ENCODE measurements at regions of chr1 and their contacts with region 1.

Region 1: GRCh38 chr1:170074250-170075157 is at the start of gene KIFAP3:
- DNase-seq: peak; percentile 97
- ATAC-seq: peak; percentile 98
- H3K4me3 Mint-ChIP-seq: peak within 1 kb of the TSS; percentile 100
- H3K27ac Mint-ChIP-seq: peak within 1 kb of the TSS; percentile 93
- H3K4me1 Mint-ChIP-seq: peaks cover 46% of the 10 kb centered on the region
- H3K27me3 Mint-ChIP-seq: no peaks in the 10 kb centered on the region
- CTCF ChIP-seq: peak; percentile 26
- total RNA-seq, gene KIFAP3: 14.0 to 14.7 TPM

Region 2: GRCh38 chr1:169893494-169894362 is 180.8 kb before region 1 on chr1 and contains the start of gene SCYL3:
- CTCF ChIA-PET with region 1: interaction called, 7 read pairs
- POLR2A ChIA-PET with region 1: no interaction called
- intact Hi-C with region 1: loop called (anchors 10 kb)
- DNase-seq: peak; percentile 93
- ATAC-seq: peak; percentile 86
- H3K4me3 Mint-ChIP-seq: peak within 1 kb of the TSS; percentile 70
- H3K27ac Mint-ChIP-seq: peak within 1 kb of the TSS; percentile 98
- H3K4me1 Mint-ChIP-seq: peaks cover 38% of the 10 kb centered on the region
- H3K27me3 Mint-ChIP-seq: no peaks in the 10 kb centered on the region
- CTCF ChIP-seq: no peak
- total RNA-seq, gene SCYL3: 7.7 to 8.4 TPM

Region 3: GRCh38 chr1:170531758-170532657 is 457.5 kb after region 1 on chr1 and contains the start of gene GORAB:
- CTCF ChIA-PET with region 1: no interaction called
- POLR2A ChIA-PET with region 1: interaction called, 3 read pairs
- intact Hi-C with region 1: loop called (anchors 10 kb)
- DNase-seq: peak; percentile 93
- ATAC-seq: peak; percentile 99
- H3K4me3 Mint-ChIP-seq: no peak within 1 kb of the TSS
- H3K27ac Mint-ChIP-seq: no peak within 1 kb of the TSS
- H3K4me1 Mint-ChIP-seq: peaks cover 9% of the 10 kb centered on the region
- H3K27me3 Mint-ChIP-seq: no peaks in the 10 kb centered on the region
- CTCF ChIP-seq: no peak
- total RNA-seq, gene GORAB: 8.2 to 9.5 TPM